ENCODE measurements at regions of chr22 and their contacts with region 1.

Region 1: GRCh38 chr22:40024201-40025061 is 29.7 kb downstream of the FAM83F start:
- DNase-seq: peak; percentile 87
- CTCF ChIP-seq: peak; percentile 87

Region 2: DNA sequence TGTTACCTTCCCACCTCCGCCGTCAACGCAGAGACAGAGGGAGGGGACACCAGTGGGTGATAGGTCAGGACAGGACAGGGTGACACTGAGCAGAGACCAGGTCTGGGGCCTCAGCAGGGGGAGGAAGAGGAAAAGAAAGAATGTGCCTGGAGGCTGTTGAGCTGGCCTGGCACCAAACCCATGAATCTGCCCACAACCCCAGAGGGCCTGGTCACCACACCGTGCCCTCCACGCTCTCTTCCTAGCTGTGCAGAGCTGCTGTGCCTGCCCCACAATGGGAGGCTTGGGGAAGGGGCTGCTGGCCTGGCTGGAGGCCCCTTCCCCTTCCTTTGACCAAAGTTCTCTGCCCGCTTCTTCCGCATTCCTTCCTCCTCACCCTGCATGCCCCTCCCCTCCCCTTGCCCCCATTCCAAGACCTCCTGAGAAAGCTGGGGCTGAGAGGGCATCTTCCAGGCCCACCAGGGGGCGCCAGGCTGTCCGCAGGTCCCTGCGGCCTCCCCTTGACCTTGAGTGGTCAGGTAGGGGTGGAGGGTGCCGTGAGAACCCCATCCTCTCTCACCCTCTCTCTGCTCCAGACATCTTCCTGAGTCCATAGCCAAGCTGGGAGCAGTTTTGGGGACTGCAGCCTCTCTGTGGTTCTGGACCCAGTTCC is 464.9 kb before region 1 on chr22:
- CTCF ChIA-PET with region 1: interaction called, 13 read pairs
- POLR2A ChIA-PET with region 1: no interaction called
- DNase-seq: peak; percentile 51
- CTCF ChIP-seq: peak; percentile 57

Region 3: GRCh38 chr22:39622881-39623367 is 401.5 kb before region 1 on chr22:
- CTCF ChIA-PET with region 1: interaction called, 11 read pairs
- POLR2A ChIA-PET with region 1: no interaction called
- DNase-seq: peak; percentile 72
- CTCF ChIP-seq: peak; percentile 76

Region 4: GRCh38 chr22:39999144-39999757 is 25.2 kb before region 1 on chr22:
- CTCF ChIA-PET with region 1: interaction called, 14 read pairs
- POLR2A ChIA-PET with region 1: no interaction called
- DNase-seq: no peak
- CTCF ChIP-seq: peak; percentile 9

Region 5: GRCh38 chr22:40009292-40009769 is 15.1 kb before region 1 on chr22:
- CTCF ChIA-PET with region 1: interaction called, 23 read pairs
- POLR2A ChIA-PET with region 1: no interaction called
- DNase-seq: no peak
- CTCF ChIP-seq: no peak

Region 6: GRCh38 chr22:40036591-40037225 is 12.3 kb after region 1 on chr22:
- CTCF ChIA-PET with region 1: interaction called, 98 read pairs
- POLR2A ChIA-PET with region 1: no interaction called
- DNase-seq: peak; percentile 72
- CTCF ChIP-seq: peak; percentile 85

Region 7: GRCh38 chr22:40044102-40044869 is 19.9 kb after region 1 on chr22:
- CTCF ChIA-PET with region 1: interaction called, 98 read pairs
- POLR2A ChIA-PET with region 1: interaction called, 6 read pairs
- DNase-seq: peak; percentile 98
- CTCF ChIP-seq: no peak

Region 8: DNA sequence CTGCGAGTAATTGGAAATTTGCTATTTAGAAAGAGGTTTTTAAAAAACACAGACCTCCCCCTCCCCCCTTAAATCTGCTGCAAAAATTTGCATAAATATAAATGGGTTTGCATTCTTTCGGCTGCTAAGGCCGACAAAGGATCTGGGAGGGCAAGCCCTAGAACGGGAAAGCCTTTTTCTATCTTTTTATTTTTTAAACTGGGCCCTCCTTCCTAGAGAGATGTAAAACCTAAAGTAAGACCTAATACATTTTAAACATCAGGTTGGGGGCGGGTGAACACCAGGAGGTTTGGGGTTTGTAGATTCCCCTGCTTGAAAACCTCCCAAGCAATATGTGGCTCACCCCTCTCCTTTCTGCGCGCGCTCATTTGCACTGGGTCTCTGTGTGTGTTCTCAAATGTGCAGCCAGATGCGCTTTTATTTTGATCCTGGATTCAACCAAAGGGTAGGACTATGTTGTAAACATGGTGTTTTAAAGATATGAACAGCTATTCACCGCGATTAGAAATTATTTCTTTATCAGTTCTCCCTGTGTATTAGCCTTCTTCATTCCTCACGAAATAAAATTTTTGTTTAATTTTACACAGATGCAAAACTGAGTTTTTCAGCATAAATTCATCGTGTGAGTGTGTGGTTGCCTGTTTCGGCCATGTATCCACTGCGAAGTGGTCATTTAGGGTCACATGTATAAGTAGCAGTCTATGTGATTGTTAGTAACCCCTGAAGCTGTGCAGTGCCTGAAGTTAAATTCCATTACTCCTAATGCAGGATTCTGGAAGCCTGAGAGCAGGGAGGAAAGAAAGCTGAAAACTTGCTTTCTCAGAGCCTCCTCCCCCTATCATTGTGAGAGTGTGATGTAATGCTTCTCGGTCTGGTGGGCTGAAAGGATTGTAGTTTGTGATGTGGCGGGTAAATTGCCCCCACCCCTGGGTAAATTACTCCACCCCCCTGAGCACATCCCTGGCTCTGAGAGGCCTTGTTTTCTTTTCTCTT is 154.3 kb after region 1 on chr22:
- CTCF ChIA-PET with region 1: no interaction called
- POLR2A ChIA-PET with region 1: no interaction called
- DNase-seq: no peak
- CTCF ChIP-seq: no peak

Region 9: DNA sequence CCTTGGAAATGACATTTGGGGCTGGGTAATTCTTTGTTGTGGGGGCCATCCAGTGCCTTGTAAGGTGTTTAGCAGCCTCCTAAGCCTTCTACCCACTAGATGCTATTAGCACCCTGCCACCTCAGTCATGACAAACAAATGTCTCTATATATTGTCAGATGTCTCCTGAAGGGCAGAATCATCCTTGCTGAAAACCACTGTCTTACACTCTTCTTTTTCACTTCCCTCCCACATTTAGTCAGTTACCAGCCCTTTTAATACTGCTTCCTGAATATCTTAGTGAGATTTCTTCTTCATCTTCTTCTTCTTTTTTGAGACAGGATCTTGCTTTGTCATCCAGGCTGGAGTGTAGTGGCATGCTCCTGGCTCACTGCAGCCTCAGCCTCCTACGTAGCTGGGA is 186.4 kb after region 1 on chr22:
- CTCF ChIA-PET with region 1: no interaction called
- POLR2A ChIA-PET with region 1: no interaction called
- DNase-seq: peak; percentile 62
- CTCF ChIP-seq: no peak

Measured in GM10248 (cell line).